ENCODE measurements at regions of chr19 and their contacts with region 1.

Region 1: GRCh38 chr19:31185272-31185671 is 164.0 kb downstream of the TSHZ3 start:
- DNase-seq: peak; percentile 34
- H3K4me3 Mint-ChIP-seq: no peak overlapping the region
- H3K27ac Mint-ChIP-seq: no peak overlapping the region
- H3K4me1 Mint-ChIP-seq: no peaks in the 10 kb centered on the region
- H3K27me3 Mint-ChIP-seq: peaks cover 13% of the 10 kb centered on the region

Region 2: DNA sequence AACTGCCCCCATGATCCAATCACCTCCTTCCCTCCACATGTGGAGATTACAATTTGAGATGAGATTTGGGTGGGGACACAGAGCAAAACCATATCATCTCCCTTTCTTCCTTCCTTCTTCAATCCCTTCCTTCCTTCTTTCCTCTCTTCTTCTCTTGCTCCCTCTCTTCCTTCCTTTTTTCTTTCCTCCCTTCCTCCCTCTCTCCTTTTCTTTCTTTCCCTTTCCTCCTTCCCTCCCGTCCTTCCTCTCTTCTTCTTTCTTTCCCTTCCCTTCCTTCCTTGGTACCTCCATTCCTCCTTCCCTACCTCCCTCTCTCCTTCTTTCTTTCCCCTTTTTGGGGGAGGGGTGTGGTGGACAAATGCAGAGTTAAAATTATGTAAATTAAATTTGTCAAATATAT is 18.8 kb after region 1 on chr19:
- intact Hi-C with region 1: no loop called
- DNase-seq: no peak
- H3K4me3 Mint-ChIP-seq: no peak overlapping the region
- H3K27ac Mint-ChIP-seq: no peak overlapping the region
- H3K4me1 Mint-ChIP-seq: no peaks in the 10 kb centered on the region
- H3K27me3 Mint-ChIP-seq: peaks cover 47% of the 10 kb centered on the region

Region 3: GRCh38 chr19:31255831-31256592 is 70.7 kb after region 1 on chr19:
- intact Hi-C with region 1: loop called (anchors 2 kb)
- DNase-seq: no peak
- H3K4me3 Mint-ChIP-seq: no peak overlapping the region
- H3K27ac Mint-ChIP-seq: no peak overlapping the region
- H3K4me1 Mint-ChIP-seq: peaks cover 3% of the 10 kb centered on the region
- H3K27me3 Mint-ChIP-seq: peaks cover 3% of the 10 kb centered on the region

Region 4: GRCh38 chr19:31270897-31271296 is 85.6 kb after region 1 on chr19:
- intact Hi-C with region 1: no loop called
- DNase-seq: no peak
- H3K4me3 Mint-ChIP-seq: no peak overlapping the region
- H3K27ac Mint-ChIP-seq: no peak overlapping the region
- H3K4me1 Mint-ChIP-seq: no peaks in the 10 kb centered on the region
- H3K27me3 Mint-ChIP-seq: no peaks in the 10 kb centered on the region